ENCODE measurements at regions of chr17 and their contacts with region 1.

Region 1: GRCh38 chr17:55238179-55238930 is 26.4 kb upstream of the HLF start:
- DNase-seq: peak; percentile 83
- H3K4me3 ChIP-seq: peak overlapping the region; percentile 40 to 57 (median 57)
- H3K27ac ChIP-seq: no peak overlapping the region
- H3K4me1 ChIP-seq: peaks cover 3% of the 10 kb centered on the region
- H3K27me3 ChIP-seq: peaks cover 0 to 11% of the 10 kb centered on the region in 2 experiments
- CTCF ChIP-seq: peak in 1 of 2 donors; percentile 0
- POLR2A ChIP-seq: no peak

Region 2: GRCh38 chr17:55216888-55217287 is 21.5 kb before region 1 on chr17:
- CTCF ChIA-PET with region 1: no interaction called
- POLR2A ChIA-PET with region 1: no interaction called
- dilution Hi-C with region 1: no loop called
- intact Hi-C with region 1: no loop called
- DNase-seq: no peak
- H3K4me3 ChIP-seq: no peak overlapping the region
- H3K27ac ChIP-seq: no peak overlapping the region
- H3K4me1 ChIP-seq: no peaks in the 10 kb centered on the region
- H3K27me3 ChIP-seq: peaks cover 3 to 6% of the 10 kb centered on the region in 2 experiments
- CTCF ChIP-seq: no peak
- POLR2A ChIP-seq: no peak

Region 3: DNA sequence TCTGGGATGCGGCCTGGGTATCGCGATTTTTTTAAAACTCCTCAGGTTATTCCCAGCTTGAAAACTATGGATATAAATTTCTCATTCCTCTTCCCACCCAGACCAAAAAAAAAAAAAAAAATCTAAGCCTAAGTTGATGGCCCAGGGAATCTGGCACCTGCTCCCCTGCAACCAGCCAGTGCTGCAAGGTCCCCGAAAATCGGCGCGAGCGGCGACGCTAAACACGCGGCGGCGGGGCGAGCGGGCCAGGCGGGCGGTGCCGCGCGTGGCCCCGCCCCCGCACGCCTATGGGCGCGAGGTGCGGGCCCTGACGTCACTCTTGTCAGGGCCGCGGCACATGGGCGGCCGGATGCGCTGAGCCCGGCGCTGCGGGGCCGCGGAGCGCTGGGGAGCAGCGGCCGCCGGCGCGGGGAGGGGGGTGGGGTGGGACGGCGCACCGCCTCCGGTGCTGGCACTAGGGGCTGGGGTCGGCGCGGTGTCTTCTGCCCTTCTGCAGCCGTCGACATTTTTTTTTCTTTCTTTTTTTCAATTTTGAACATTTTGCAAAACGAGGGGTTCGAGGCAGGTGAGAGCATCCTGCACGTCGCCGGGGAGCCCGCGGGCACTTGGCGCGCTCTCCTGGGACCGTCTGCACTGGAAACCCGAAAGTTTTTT is 26.4 kb after region 1 on chr17 and contains the start of gene HLF:
- CTCF ChIA-PET with region 1: no interaction called
- POLR2A ChIA-PET with region 1: no interaction called
- dilution Hi-C with region 1: no loop called
- intact Hi-C with region 1: loop called (anchors 1 kb)
- DNase-seq: peak; percentile 52
- H3K4me3 ChIP-seq: peak within 1 kb of the TSS in 2 of 3 experiments; percentile 20 to 31
- H3K27ac ChIP-seq: no peak within 1 kb of the TSS
- H3K4me1 ChIP-seq: peaks cover 2% of the 10 kb centered on the region
- H3K27me3 ChIP-seq: peaks cover 47 to 81% of the 10 kb centered on the region in 2 experiments
- CTCF ChIP-seq: no peak
- POLR2A ChIP-seq: no peak
- total RNA-seq, gene HLF: not detected in 2 replicates